ENCODE measurements at regions of chr19 and their contacts with region 1.

Region 1: GRCh38 chr19:17766543-17767131 is 15.4 kb downstream of the FCHO1 start:
- DNase-seq: no peak
- H3K4me3 ChIP-seq: peak overlapping the region; percentile 10; the same call in 1 of the 2 replicates
- H3K27me3 ChIP-seq: no peaks in the 10 kb centered on the region
- CTCF ChIP-seq: peak; percentile 99

Region 2: DNA sequence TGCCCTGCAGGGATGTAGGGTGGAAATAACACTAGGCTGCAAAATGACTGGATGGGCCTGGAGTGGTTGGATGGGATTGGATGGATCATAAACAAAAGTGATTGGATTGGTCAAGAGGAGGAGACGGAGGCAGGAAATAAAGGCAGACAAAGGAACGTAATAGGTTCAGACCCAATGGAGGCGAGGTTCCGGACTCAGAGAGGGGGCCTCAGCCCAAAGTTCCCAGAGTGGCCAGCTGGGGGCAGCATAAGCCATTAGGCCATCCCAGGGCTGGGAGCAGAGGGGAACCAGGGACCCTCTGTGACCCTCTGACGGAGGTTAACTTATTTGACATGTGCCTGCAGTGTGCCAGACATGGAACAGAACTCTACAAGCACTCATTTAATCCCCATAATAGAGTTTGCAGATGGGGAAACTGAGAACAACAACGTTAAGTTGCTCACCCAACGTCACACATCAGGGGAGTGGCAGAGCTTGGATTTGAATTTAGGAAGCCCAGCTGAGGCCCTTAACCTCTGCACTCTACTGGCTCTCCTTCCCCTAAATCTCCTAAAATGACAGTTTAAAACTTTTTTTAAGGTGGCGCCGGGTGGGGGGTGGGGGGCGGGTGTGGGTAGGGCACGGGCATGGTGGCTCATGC is 62.7 kb before region 1 on chr19:
- CTCF ChIA-PET with region 1: interaction called, 43 read pairs
- POLR2A ChIA-PET with region 1: no interaction called
- DNase-seq: no peak
- H3K4me3 ChIP-seq: no peak overlapping the region
- H3K27me3 ChIP-seq: peaks cover 2% of the 10 kb centered on the region; the same call in 1 of the 2 replicates
- CTCF ChIP-seq: peak; percentile 74

Region 3: DNA sequence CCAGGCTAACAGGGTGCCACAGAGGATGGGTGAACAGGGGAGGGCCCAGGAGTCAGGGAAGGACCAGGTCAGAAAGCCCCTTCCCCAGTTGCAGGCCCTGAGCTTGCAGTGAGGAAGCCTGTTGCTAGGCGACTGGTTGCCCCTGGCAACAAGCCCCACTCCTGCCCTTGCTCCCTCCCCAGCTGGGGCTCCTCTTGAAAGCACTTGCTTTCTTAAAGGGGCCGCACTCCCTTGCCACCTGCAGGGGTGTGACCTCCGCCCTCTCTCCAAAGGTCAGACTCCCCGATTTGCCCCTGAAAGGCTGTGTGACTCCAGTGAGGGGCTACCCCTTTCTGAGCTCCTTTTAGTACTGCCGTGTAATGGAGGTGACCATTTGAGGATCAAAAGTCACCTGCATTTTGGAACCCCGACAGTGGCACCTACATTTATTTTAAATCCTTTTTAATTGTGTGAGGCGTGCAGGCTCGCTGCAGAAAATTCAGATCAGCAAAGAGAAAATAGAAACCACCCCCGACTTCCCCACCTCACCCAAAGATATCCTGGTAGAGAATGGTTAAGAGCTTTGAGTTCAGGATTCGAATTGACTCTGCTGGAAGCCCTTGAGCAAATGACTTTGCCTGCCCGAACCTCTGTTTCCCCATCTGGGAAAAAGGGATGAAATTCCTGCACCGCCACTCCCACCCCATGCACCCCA is 10.5 kb before region 1 on chr19:
- CTCF ChIA-PET with region 1: interaction called, 19 read pairs
- POLR2A ChIA-PET with region 1: no interaction called
- DNase-seq: no peak
- H3K4me3 ChIP-seq: no peak overlapping the region
- H3K27me3 ChIP-seq: peaks cover 2% of the 10 kb centered on the region
- CTCF ChIP-seq: no peak

Region 4: DNA sequence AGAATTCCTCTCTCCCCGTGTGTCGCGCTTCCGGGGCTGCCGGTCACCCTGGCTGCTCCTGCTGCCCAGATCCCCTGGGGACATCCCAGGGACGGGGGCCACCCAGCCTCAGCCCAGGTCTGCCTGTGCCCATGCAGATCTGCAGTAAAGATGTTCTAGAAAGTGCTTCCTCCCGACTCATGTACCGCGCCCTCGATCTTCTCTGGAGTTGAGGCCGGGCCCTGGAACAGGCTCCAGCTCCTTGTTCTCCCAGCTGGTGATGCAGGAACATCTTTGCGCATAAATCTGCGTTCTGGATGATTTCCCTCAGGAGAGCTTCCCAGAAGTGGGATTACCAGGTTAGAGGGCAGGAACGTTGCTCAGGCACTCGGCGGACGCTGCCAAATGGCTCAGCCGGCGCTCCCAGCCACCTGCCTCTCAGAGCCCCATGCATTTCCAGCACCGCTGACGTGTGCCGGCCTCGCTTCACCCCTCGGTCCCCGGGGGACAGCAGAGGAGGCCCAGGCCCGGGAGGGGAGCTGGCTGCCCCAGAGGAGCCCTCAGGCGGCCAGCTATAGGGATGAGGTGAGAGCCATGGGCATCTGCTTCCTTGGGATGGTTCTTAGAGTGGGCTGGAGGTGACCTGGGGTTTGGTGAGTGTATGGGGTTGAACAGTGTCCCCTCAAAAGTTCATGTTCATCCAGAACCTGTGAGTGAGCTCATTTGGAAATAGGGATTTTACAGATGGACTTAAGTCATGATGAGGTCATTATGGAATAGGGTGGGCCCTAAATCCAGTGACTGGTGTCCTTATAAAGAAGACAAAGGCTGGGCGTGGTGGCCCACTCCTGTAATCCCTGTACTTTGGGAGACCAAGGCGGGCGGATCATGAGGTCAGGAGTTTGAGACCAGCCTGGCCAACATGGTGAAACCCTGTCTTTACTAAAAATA is 959.5 kb after region 1 on chr19:
- CTCF ChIA-PET with region 1: no interaction called
- POLR2A ChIA-PET with region 1: no interaction called
- DNase-seq: no peak
- H3K4me3 ChIP-seq: no peak overlapping the region
- H3K27me3 ChIP-seq: no peaks in the 10 kb centered on the region
- CTCF ChIP-seq: no peak

Measured in BJ (cell line).